ENCODE measurements at regions of chr12 and their contacts with region 1.

Region 1: GRCh38 chr12:114662512-114663177 is 21.3 kb downstream of the TBX3 start:
- DNase-seq: peak; percentile 86 to 92 (median 88)
- ATAC-seq: peak; percentile 89
- H3K4me3 ChIP-seq: no peak overlapping the region
- H3K27ac ChIP-seq: peak overlapping the region in 1 of 4 donors; percentile 30
- H3K4me1 ChIP-seq: peaks cover 11% of the 10 kb centered on the region
- H3K27me3 ChIP-seq: peaks cover 4 to 18% of the 10 kb centered on the region in 2 donors
- CTCF ChIP-seq: peak; percentile 80 to 97 (median 95)
- POLR2A ChIP-seq: no peak

Region 2: DNA sequence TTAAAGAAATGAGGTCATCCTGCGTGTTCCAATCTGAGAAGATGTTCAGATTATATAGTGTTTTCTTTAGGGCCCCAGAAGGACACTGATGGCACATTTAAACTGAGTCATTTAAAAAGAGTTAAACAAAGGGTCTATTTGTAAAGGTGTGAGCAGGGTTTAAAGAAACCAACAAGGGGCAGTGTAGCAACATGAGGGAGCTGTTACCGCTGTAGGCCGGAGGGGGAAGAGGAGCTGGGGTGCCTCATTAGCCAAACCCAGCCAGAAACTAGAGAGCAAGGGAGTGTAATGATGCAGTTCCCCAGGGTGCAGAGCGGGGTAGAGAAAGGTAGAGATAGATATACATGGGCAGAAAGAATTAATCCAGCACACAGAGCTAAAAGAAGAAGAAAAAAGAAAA is 417.1 kb before region 1 on chr12:
- intact Hi-C with region 1: no loop called
- DNase-seq: no peak
- ATAC-seq: no peak
- H3K4me3 ChIP-seq: no peak overlapping the region
- H3K27ac ChIP-seq: no peak overlapping the region
- H3K4me1 ChIP-seq: no peaks in the 10 kb centered on the region
- H3K27me3 ChIP-seq: no peaks in the 10 kb centered on the region
- CTCF ChIP-seq: no peak
- POLR2A ChIP-seq: no peak

Region 3: DNA sequence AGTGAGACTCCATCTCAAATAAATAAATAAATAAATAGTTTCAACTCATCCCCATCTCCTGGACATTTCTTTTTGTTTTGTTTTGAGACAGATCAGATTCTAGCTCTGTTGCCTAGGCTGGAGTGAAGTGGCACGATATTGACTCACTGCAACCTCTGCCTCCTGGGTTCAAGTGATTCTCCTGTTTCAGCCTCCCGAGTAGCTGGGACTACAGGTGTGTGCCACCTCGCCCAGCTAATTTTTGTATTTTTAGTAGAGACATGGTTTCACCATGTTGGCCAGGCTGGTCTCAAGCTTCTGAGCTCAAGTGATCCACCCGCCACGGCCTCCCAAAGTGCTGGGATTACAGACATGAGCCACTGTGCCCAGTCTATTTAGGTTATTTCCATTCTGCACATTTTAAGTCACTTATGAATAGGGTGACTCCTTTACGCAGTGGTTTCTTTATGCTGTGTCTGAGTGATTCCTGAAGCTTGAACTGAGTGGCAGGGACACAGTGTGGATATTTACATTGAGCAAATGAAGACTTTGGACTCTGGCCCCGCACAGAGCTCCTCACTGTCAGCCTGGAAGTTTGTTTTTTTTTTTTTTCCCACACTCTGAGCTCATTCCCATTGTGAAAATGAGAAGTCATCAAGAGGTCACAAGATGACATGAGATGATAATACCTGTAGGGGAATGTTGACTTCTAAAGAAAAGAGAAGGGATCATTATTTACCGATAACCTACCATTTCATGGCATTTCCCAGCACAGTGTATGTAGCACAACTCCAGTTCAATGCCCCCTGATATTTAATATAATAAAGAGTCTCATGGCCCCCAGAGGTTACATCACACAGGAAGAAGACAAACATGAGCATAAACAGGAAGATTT is 51.3 kb before region 1 on chr12:
- intact Hi-C with region 1: no loop called
- DNase-seq: no peak
- ATAC-seq: no peak
- H3K4me3 ChIP-seq: no peak overlapping the region
- H3K27ac ChIP-seq: no peak overlapping the region
- H3K4me1 ChIP-seq: no peaks in the 10 kb centered on the region
- H3K27me3 ChIP-seq: no peaks in the 10 kb centered on the region
- CTCF ChIP-seq: no peak
- POLR2A ChIP-seq: no peak

Region 4: DNA sequence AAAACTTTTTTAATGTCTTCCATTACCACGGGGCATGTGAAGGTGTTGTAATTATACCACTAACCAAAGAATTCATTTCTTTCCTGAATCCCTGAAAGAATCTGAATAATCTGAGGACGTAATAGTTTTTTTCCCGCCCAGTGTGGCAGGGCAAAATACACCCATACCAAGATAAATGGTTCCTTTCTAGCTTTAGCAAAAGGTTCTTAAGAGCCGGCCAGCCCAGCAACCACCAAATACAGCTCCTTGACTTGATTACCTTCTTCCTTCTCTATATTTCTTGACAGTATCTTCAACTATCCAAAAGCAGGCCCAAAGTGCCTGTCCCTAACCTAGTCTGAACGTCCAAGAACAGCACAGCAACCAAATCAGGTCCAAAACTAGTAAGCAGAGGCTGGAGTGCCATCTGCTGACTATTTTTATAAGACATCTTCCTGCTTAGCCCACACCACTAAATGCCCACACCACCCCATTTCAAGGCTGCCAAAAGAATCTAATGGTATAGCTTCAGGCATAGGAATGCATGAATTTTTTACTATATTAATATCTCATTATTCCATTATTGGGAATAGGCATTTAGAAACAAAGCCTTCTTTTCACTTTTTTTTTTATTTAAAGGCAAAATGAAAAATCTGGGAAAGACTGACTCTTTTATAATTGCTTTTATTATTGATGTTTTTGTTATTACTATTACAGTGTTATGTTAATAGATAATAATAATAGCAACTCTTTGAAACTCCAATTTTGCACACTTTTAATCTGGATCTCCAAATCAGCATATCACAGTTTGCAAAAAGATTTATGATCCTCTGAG is 1090.5 kb after region 1 on chr12:
- intact Hi-C with region 1: loop called (anchors 5 kb)
- DNase-seq: peak; percentile 37 to 49 (median 39)
- ATAC-seq: peak; percentile 65
- H3K4me3 ChIP-seq: no peak overlapping the region
- H3K27ac ChIP-seq: no peak overlapping the region
- H3K4me1 ChIP-seq: no peaks in the 10 kb centered on the region
- H3K27me3 ChIP-seq: no peaks in the 10 kb centered on the region
- CTCF ChIP-seq: peak; percentile 6 to 67 (median 61)
- POLR2A ChIP-seq: no peak